ENCODE measurements at regions of chr5 and their contacts with region 1.

Region 1: GRCh38 chr5:140710899-140711552 is 10.8 kb downstream of the ZMAT2 start:
- DNase-seq: peak; percentile 97
- H3K4me3 Mint-ChIP-seq: peak overlapping the region; percentile 90
- H3K27ac Mint-ChIP-seq: peak overlapping the region; percentile 96
- H3K4me1 Mint-ChIP-seq: peaks cover 20% of the 10 kb centered on the region
- H3K27me3 Mint-ChIP-seq: peaks cover 8% of the 10 kb centered on the region

Region 2: DNA sequence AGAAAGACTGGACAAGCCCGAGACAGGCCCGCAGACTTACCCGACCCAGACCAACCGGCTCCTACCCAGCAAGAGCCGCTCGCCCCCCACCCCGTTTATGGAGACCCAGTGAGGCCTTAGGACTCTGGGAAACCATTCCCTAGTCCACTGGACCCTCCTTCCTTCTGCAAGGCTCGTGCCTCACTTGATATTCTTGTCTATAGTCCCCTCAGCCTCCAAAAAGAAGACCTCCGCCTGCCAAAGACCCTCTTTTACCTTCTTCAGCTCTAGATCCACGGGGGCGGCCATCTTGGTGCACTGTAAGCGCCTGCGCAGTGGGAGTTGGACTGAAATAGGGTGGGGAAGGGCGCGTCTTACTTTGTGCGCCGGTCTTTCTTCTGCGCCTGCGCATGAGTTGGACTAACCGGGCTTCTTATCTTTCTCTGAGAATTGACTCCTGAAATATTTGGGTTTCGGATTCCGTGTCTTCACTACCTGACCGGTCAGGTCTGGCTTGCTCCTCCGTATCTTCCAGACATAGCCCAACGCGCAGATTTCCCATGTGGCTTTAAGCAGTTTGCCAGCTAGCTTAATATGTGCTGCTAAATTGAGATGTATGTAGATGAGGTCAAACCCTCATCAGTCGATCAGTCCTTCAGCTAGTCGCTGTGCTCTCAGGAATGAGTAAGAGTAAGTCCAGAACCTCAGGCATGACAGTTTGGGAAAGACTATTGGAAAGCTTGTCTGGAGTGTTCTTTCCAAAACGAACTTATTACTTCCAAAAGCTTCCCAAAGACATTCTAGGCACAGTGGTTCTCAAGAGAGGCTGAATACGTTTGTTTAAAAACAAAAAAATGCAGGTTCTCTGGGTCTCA is 408.0 kb before region 1 on chr5 and contains the start of gene PFDN1:
- intact Hi-C with region 1: loop called (anchors 5 kb)
- DNase-seq: peak; percentile 98
- H3K4me3 Mint-ChIP-seq: peak within 1 kb of the TSS; percentile 97
- H3K27ac Mint-ChIP-seq: peak within 1 kb of the TSS; percentile 95
- H3K4me1 Mint-ChIP-seq: peaks cover 15% of the 10 kb centered on the region
- H3K27me3 Mint-ChIP-seq: peaks cover 4% of the 10 kb centered on the region
- total RNA-seq, gene PFDN1: 51.5 and 57.9 TPM in 2 replicates

Region 3: DNA sequence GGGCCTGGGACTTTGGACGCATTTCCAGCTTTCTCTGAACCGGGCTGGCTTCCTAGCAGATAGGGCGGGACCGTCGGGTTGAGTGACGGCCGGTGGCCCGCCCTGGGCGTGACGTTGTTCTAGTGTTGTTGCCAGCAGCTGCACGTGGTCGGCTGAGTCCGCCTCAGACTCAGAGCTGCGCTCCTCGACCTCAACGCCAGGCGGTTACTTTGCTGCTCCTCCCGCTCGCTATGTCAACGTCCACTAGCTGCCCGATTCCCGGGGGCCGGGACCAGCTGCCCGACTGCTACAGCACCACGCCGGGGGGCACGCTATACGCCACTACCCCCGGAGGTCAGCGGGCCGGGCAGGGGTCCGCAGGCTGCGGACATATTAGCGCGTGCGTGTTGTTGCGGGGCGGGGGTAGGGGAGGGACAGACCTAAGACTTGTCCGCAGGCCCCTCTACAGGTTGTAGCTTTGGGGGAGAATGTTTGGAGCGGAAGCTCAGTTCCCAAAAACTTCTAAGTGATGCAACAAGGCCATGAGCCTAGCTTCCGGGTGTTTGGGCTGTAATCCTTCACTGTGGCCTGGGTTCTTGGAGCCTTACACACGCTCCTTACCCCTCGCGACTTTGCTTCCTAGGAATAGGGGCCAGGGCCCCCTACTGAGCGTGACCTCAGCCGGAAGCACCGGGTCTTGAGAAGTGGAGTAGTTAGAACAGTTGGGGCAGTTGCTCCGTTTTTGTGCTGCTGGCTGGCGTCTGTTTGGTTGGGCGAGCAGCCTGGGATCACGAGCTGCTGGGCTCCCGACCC is 163.3 kb before region 1 on chr5 and contains the start of gene EIF4EBP3:
- intact Hi-C with region 1: loop called (anchors 5 kb)
- DNase-seq: peak; percentile 96
- H3K4me3 Mint-ChIP-seq: peak within 1 kb of the TSS; percentile 82
- H3K27ac Mint-ChIP-seq: peak within 1 kb of the TSS; percentile 89
- H3K4me1 Mint-ChIP-seq: peaks cover 26% of the 10 kb centered on the region
- H3K27me3 Mint-ChIP-seq: no peaks in the 10 kb centered on the region
- total RNA-seq, gene EIF4EBP3: 13.8 and 13.9 TPM in 2 replicates

Region 4: DNA sequence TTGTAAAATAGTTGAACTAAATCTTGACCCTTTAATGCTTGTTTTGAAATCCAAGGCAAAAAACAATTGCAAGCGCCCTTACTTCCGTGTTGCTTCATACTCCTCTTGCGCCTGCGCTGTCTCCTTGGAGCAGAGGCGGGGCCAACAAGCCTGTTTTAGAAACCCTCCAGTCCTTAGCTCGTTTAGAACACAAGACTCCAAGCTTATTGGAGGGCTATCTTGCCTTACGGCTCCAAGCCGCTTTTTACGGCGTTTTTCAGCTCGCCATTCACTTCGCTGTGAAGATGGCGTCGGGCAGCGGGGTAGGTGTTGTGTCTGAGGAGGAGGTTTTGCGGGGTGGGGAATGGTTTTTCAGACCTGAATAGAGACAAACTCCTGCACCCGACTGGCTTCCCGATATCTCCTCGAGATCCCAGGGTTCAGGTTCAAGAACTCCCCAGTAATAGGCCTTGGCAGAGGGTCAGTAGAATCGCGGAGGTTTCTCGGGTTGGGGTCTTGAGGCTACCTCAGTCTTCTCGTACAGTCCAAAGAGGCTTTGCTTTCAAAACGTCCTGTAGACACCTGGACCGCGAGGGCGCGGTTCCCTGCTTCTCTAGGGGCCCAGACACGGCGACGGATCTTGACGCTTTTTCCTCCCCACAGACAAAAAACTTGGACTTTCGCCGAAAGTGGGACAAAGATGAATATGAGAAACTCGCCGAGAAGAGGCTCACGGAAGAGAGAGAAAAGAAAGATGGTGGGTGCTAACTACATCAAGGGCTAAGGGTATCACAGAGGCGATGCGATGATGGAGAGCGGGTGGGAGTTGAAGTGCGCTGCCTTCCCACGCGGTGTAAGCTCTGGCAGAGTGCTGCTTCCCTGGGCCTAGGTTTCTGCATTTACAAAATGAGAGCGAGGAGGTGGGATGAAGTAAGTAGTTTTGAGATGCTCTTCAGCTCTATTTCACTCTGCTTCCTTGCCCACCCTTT is 10.6 kb before region 1 on chr5 and contains the start of gene ZMAT2:
- intact Hi-C with region 1: loop called (anchors 1 kb)
- DNase-seq: peak; percentile 98
- H3K4me3 Mint-ChIP-seq: peak within 1 kb of the TSS; percentile 99
- H3K27ac Mint-ChIP-seq: peak within 1 kb of the TSS; percentile 96
- H3K4me1 Mint-ChIP-seq: peaks cover 24% of the 10 kb centered on the region
- H3K27me3 Mint-ChIP-seq: no peaks in the 10 kb centered on the region
- total RNA-seq, gene ZMAT2: 67.1 and 67.2 TPM in 2 replicates

Region 5: GRCh38 chr5:140725799-140726471 is 14.9 kb after region 1 on chr5:
- intact Hi-C with region 1: loop called (anchors 1 kb)
- DNase-seq: peak; percentile 93
- H3K4me3 Mint-ChIP-seq: peak overlapping the region; percentile 84
- H3K27ac Mint-ChIP-seq: peak overlapping the region; percentile 83
- H3K4me1 Mint-ChIP-seq: peaks cover 8% of the 10 kb centered on the region
- H3K27me3 Mint-ChIP-seq: peaks cover 20% of the 10 kb centered on the region

Measured in activated CD4-positive, alpha-beta T cell treated with anti-CD3 and anti-CD28 coated beads, Interleukin-2, amount 10 ng/mL, durations not matched to agents 24 days and 14 days (primary cell).